ENCODE measurements at regions of chrX and their contacts with region 1.

Region 1: DNA sequence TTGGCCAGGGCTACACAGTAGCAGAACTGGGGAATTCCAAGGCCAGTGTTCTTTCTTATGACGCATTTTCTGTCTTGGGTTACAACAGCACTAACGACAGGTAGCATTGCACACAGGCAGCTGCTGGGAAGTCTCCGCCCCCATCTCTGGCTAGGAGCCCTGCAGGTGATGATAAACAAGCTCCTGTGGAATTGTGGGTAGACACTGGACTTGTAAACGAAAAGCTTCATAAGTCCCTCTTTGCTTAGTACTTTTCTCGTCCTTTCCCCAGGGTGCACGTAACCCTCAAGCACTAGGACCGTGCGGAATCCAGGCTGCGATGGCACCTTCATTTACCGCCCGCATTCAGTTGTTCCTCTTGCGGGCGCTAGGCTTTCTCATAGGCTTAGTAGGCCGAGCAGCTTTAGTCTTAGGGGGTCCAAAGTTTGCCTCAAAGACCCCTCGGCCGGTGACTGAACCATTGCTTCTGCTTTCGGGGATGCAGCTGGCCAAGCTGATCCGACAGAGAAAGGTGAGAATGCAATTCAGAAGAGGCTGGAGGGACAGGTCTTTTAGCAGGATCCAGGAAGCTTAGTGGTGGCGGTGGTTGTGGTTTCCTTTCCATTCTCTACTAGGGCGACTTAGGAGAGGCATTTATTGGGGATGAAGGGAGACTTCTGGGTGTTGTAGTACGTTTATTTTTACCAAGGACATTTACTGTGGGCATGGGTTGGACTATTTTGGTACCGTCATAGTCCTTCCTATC is at the start of gene FAAH2:
- DNase-seq: peak; percentile 86
- H3K4me3 Mint-ChIP-seq: peak within 1 kb of the TSS; percentile 91
- H3K27ac Mint-ChIP-seq: peak within 1 kb of the TSS; percentile 88
- H3K4me1 Mint-ChIP-seq: peaks cover 36% of the 10 kb centered on the region
- H3K27me3 Mint-ChIP-seq: no peaks in the 10 kb centered on the region
- total RNA-seq, gene FAAH2: 4.0 and 5.0 TPM in 2 replicates

Region 2: GRCh38 chrX:56366901-56367300 is 919.8 kb before region 1 on chrX:
- intact Hi-C with region 1: loop called (anchors 10 kb)
- DNase-seq: no peak
- H3K4me3 Mint-ChIP-seq: no peak overlapping the region
- H3K27ac Mint-ChIP-seq: peak overlapping the region; percentile 34
- H3K4me1 Mint-ChIP-seq: peaks cover 48% of the 10 kb centered on the region
- H3K27me3 Mint-ChIP-seq: no peaks in the 10 kb centered on the region

Region 3: GRCh38 chrX:56813318-56813837 is 473.3 kb before region 1 on chrX:
- intact Hi-C with region 1: loop called (anchors 5 kb)
- DNase-seq: peak; percentile 83
- H3K4me3 Mint-ChIP-seq: peak overlapping the region; percentile 82
- H3K27ac Mint-ChIP-seq: peak overlapping the region; percentile 99
- H3K4me1 Mint-ChIP-seq: peaks cover 25% of the 10 kb centered on the region
- H3K27me3 Mint-ChIP-seq: no peaks in the 10 kb centered on the region

Region 4: GRCh38 chrX:57380026-57380796 is 93.5 kb after region 1 on chrX:
- intact Hi-C with region 1: loop called (anchors 1 kb)
- DNase-seq: no peak
- H3K4me3 Mint-ChIP-seq: no peak overlapping the region
- H3K27ac Mint-ChIP-seq: peak overlapping the region; percentile 55
- H3K4me1 Mint-ChIP-seq: peaks cover 10% of the 10 kb centered on the region
- H3K27me3 Mint-ChIP-seq: no peaks in the 10 kb centered on the region

Region 5: GRCh38 chrX:57595381-57595811 is 308.7 kb after region 1 on chrX:
- intact Hi-C with region 1: loop called (anchors 2 kb)
- DNase-seq: no peak
- H3K4me3 Mint-ChIP-seq: peak overlapping the region; percentile 74
- H3K27ac Mint-ChIP-seq: no peak overlapping the region
- H3K4me1 Mint-ChIP-seq: peaks cover 19% of the 10 kb centered on the region
- H3K27me3 Mint-ChIP-seq: no peaks in the 10 kb centered on the region